ENCODE measurements at regions of chr11 and their contacts with region 1.

Region 1: GRCh38 chr11:68798221-68798813 is 43.4 kb downstream of the CPT1A start:
- DNase-seq: peak; percentile 23 to 89
- H3K4me3 ChIP-seq: no peak overlapping the region
- H3K27ac ChIP-seq: no peak overlapping the region
- H3K4me1 ChIP-seq: peaks cover 0 to 4% (median 2%) of the 10 kb centered on the region in 4 experiments; a peak in 3 of 7 replicates
- H3K27me3 ChIP-seq: no peaks in the 10 kb centered on the region
- CTCF ChIP-seq: peak; percentile 79 to 93 (median 91)
- EP300 ChIP-seq: no peak
- POLR2A ChIP-seq: no peak
- RAD21 ChIP-seq: peak; percentile 60 to 73

Region 2: DNA sequence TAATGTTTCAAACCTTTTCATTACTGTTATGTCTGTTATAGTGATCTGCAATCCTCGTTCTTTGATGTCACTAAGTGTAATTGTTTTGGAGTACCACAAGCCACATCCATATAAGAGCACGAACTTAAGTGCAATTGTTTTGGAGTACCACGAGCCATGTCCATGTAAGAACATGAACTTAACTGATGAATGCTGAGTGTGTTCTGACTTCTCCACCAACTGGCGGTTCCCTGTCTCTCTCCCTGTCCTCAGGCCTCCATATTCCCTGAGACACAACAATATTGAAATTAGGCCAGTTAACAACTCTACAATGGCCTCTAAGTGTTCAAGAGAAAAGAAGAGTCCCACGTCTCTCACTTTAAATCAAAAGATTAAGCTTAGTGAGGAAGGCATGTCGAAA is 70.5 kb before region 1 on chr11:
- CTCF ChIA-PET with region 1: interaction called, 11 read pairs
- POLR2A ChIA-PET with region 1: interaction called, 3 read pairs
- DNase-seq: no peak
- H3K4me3 ChIP-seq: no peak overlapping the region
- H3K27ac ChIP-seq: no peak overlapping the region
- H3K4me1 ChIP-seq: peaks cover 0 to 3% (median 0%) of the 10 kb centered on the region in 4 experiments; a peak in 3 of 7 replicates
- H3K27me3 ChIP-seq: no peaks in the 10 kb centered on the region
- CTCF ChIP-seq: no peak; a peak in 1 of 4 replicates
- EP300 ChIP-seq: no peak
- POLR2A ChIP-seq: no peak
- RAD21 ChIP-seq: peak; percentile 42 to 47; a peak in 3 of 4 replicates

Region 3: DNA sequence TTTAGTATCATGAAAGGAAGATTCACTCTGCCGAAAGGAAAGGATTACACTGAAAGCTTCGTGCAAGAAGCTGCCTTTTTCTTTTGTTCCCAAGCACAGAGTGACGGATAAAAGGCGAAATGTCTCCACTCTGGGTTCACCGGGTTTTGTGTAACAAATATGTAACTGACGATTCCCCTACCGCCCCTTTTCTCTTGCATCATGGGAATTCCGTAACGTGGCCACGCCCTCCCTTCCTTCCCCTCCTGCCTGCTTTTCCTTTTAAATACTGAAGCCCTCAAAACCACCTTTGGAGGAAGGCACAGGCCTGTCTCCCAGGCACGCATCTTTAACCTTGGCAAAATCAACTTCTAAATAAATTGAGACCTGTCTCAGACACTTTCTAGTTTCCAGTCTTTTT is 30.6 kb before region 1 on chr11:
- CTCF ChIA-PET with region 1: interaction called, 12 read pairs
- POLR2A ChIA-PET with region 1: no interaction called
- DNase-seq: no peak
- H3K4me3 ChIP-seq: no peak overlapping the region
- H3K27ac ChIP-seq: no peak overlapping the region
- H3K4me1 ChIP-seq: peaks cover 0 to 6% (median 2%) of the 10 kb centered on the region in 4 experiments; a peak in 2 of 7 replicates
- H3K27me3 ChIP-seq: no peaks in the 10 kb centered on the region
- CTCF ChIP-seq: no peak
- EP300 ChIP-seq: no peak
- POLR2A ChIP-seq: no peak
- RAD21 ChIP-seq: no peak

Region 4: GRCh38 chr11:68784653-68785052 is 13.7 kb before region 1 on chr11:
- CTCF ChIA-PET with region 1: interaction called, 24 read pairs
- POLR2A ChIA-PET with region 1: interaction called, 3 read pairs
- DNase-seq: no peak
- H3K4me3 ChIP-seq: no peak overlapping the region
- H3K27ac ChIP-seq: no peak overlapping the region
- H3K4me1 ChIP-seq: peaks cover 0 to 4% (median 0%) of the 10 kb centered on the region in 4 experiments; a peak in 2 of 7 replicates
- H3K27me3 ChIP-seq: no peaks in the 10 kb centered on the region
- CTCF ChIP-seq: no peak
- EP300 ChIP-seq: no peak
- POLR2A ChIP-seq: no peak
- RAD21 ChIP-seq: no peak

Region 5: GRCh38 chr11:68825571-68825970 is 27.3 kb after region 1 on chr11:
- CTCF ChIA-PET with region 1: interaction called, 63 read pairs
- POLR2A ChIA-PET with region 1: no interaction called
- DNase-seq: peak in 1 of 2 experiments; percentile 54
- H3K4me3 ChIP-seq: no peak overlapping the region
- H3K27ac ChIP-seq: no peak overlapping the region
- H3K4me1 ChIP-seq: peaks cover 3 to 6% (median 5%) of the 10 kb centered on the region in 4 experiments
- H3K27me3 ChIP-seq: no peaks in the 10 kb centered on the region
- CTCF ChIP-seq: peak; percentile 48 to 59 (median 54)
- EP300 ChIP-seq: no peak
- POLR2A ChIP-seq: no peak
- RAD21 ChIP-seq: peak; percentile 56 to 63